CD8-positive, alpha-beta T cell (primary cell): ENCODE measurements at regions of chrX and their contacts with region 1.

Region 1: GRCh38 chrX:19682712-19683331 is 167.5 kb upstream of the MAP3K15 start:
- DNase-seq: peak; percentile 54 to 94 (median 72)
- ATAC-seq: peak; percentile 74
- H3K4me3 ChIP-seq: no peak overlapping the region
- H3K4me3 Mint-ChIP-seq: peak overlapping the region; percentile 49
- H3K27ac ChIP-seq: peak overlapping the region; percentile 53 to 88
- H3K27ac Mint-ChIP-seq: peak overlapping the region; percentile 98
- H3K4me1 ChIP-seq: peaks cover 45% of the 10 kb centered on the region
- H3K4me1 Mint-ChIP-seq: peaks cover 85% of the 10 kb centered on the region
- H3K27me3 ChIP-seq: no peaks in the 10 kb centered on the region
- H3K27me3 Mint-ChIP-seq: no peaks in the 10 kb centered on the region
- CTCF ChIP-seq: no peak

Region 2: GRCh38 chrX:19695884-19696283 is 13.1 kb after region 1 on chrX:
- CTCF ChIA-PET with region 1: no interaction called
- POLR2A ChIA-PET with region 1: no interaction called
- intact Hi-C with region 1: loop called in 1 of 2 experiments (anchors 2 kb)
- DNase-seq: no peak
- ATAC-seq: no peak
- H3K4me3 ChIP-seq: no peak overlapping the region
- H3K4me3 Mint-ChIP-seq: no peak overlapping the region
- H3K27ac ChIP-seq: no peak overlapping the region
- H3K27ac Mint-ChIP-seq: peak overlapping the region; percentile 56
- H3K4me1 ChIP-seq: peaks cover 10% of the 10 kb centered on the region
- H3K4me1 Mint-ChIP-seq: peaks cover 35% of the 10 kb centered on the region
- H3K27me3 ChIP-seq: no peaks in the 10 kb centered on the region
- H3K27me3 Mint-ChIP-seq: no peaks in the 10 kb centered on the region
- CTCF ChIP-seq: no peak

Region 3: DNA sequence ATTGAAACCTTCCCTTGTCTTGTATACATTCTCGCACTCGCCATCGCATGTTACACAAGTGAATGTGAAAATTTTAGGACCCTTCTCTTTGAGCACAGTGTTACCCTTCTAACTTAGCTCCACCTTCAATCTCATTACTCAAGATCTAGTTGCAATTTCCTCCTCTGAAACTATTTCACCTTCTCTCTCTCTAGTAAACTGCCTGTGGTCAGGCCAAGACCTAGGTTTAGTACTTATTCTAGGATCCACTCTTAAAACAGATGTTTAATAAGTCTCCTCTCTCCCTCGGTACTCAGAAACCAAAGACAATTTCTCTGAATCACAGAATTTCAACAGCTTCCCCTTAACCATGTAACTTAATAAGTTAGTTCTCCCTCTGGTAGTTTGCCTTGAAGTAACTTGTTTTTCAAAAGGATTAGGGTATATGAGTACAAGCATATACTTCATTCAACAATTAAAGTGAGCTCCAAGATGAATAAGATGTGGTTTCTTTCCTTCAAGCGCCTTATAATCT is 48.5 kb after region 1 on chrX:
- CTCF ChIA-PET with region 1: interaction called, 3 read pairs
- POLR2A ChIA-PET with region 1: no interaction called
- intact Hi-C with region 1: loop called in 1 of 2 experiments (anchors 5 kb)
- DNase-seq: no peak
- ATAC-seq: no peak
- H3K4me3 ChIP-seq: no peak overlapping the region
- H3K4me3 Mint-ChIP-seq: no peak overlapping the region
- H3K27ac ChIP-seq: no peak overlapping the region
- H3K27ac Mint-ChIP-seq: peak overlapping the region; percentile 52
- H3K4me1 ChIP-seq: peaks cover 35% of the 10 kb centered on the region
- H3K4me1 Mint-ChIP-seq: peaks cover 75% of the 10 kb centered on the region
- H3K27me3 ChIP-seq: no peaks in the 10 kb centered on the region
- H3K27me3 Mint-ChIP-seq: no peaks in the 10 kb centered on the region
- CTCF ChIP-seq: no peak

Region 4: GRCh38 chrX:19747652-19748610 is 65.1 kb after region 1 on chrX:
- CTCF ChIA-PET with region 1: no interaction called
- POLR2A ChIA-PET with region 1: no interaction called
- intact Hi-C with region 1: loop called in 1 of 2 experiments (anchors 5 kb)
- DNase-seq: peak; percentile 59 to 89 (median 77)
- ATAC-seq: peak; percentile 74
- H3K4me3 ChIP-seq: peak overlapping the region in 1 of 2 experiments; percentile 15
- H3K4me3 Mint-ChIP-seq: peak overlapping the region; percentile 56
- H3K27ac ChIP-seq: peak overlapping the region; percentile 85 to 89
- H3K27ac Mint-ChIP-seq: peak overlapping the region; percentile 99
- H3K4me1 ChIP-seq: peaks cover 99% of the 10 kb centered on the region
- H3K4me1 Mint-ChIP-seq: peaks cover 93% of the 10 kb centered on the region
- H3K27me3 ChIP-seq: no peaks in the 10 kb centered on the region
- H3K27me3 Mint-ChIP-seq: no peaks in the 10 kb centered on the region
- CTCF ChIP-seq: no peak

Region 5: GRCh38 chrX:19799319-19800182 is 116.7 kb after region 1 on chrX:
- CTCF ChIA-PET with region 1: no interaction called
- POLR2A ChIA-PET with region 1: no interaction called
- intact Hi-C with region 1: no loop called
- DNase-seq: peak in 8 of 9 experiments; percentile 31 to 77 (median 60)
- ATAC-seq: peak; percentile 81
- H3K4me3 ChIP-seq: peak overlapping the region; percentile 45 to 60
- H3K4me3 Mint-ChIP-seq: peak overlapping the region; percentile 91
- H3K27ac ChIP-seq: peak overlapping the region; percentile 63 to 73
- H3K27ac Mint-ChIP-seq: peak overlapping the region; percentile 98
- H3K4me1 ChIP-seq: peaks cover 51% of the 10 kb centered on the region
- H3K4me1 Mint-ChIP-seq: peaks cover 68% of the 10 kb centered on the region
- H3K27me3 ChIP-seq: no peaks in the 10 kb centered on the region
- H3K27me3 Mint-ChIP-seq: no peaks in the 10 kb centered on the region
- CTCF ChIP-seq: no peak